Stomach (tissue), 19 donors: ENCODE measurements at regions of chr20 and their contacts with region 1.

Region 1: GRCh38 chr20:63381807-63382322 is 20.7 kb upstream of the CHRNA4 start:
- DNase-seq: peak in 1 of 2 donors; percentile 59
- H3K4me3 ChIP-seq: no peak overlapping the region
- H3K27ac ChIP-seq: no peak overlapping the region
- H3K4me1 ChIP-seq: peaks cover 0 to 5% (median 0%) of the 10 kb centered on the region in 4 donors
- H3K27me3 ChIP-seq: peaks cover 16 to 79% (median 59%) of the 10 kb centered on the region in 3 donors
- CTCF ChIP-seq: peak in 5 of 7 experiments; percentile 64 to 88 (median 80)
- EP300 ChIP-seq: no peak
- POLR2A ChIP-seq: no peak

Region 2: GRCh38 chr20:63309261-63310071 is 72.4 kb before region 1 on chr20:
- intact Hi-C with region 1: loop called (anchors 5 kb)
- DNase-seq: peak; percentile 36 to 85
- H3K4me3 ChIP-seq: no peak overlapping the region
- H3K27ac ChIP-seq: no peak overlapping the region
- H3K4me1 ChIP-seq: peaks cover 0 to 7% (median 3%) of the 10 kb centered on the region in 4 donors
- H3K27me3 ChIP-seq: peaks cover 2 to 95% (median 56%) of the 10 kb centered on the region in 3 donors
- CTCF ChIP-seq: peak in 5 of 7 experiments; percentile 58 to 84 (median 77)
- EP300 ChIP-seq: no peak
- POLR2A ChIP-seq: no peak

Region 3: GRCh38 chr20:63574156-63574828 is 192.4 kb after region 1 on chr20 and contains the start of gene HELZ2:
- intact Hi-C with region 1: no loop called
- DNase-seq: peak; percentile 87 to 93
- H3K4me3 ChIP-seq: peak within 1 kb of the TSS; percentile 68 to 86 (median 73)
- H3K27ac ChIP-seq: peak within 1 kb of the TSS; percentile 67 to 93 (median 91)
- H3K4me1 ChIP-seq: peaks cover 12 to 38% (median 30%) of the 10 kb centered on the region in 4 donors
- H3K27me3 ChIP-seq: peaks cover 0 to 5% (median 4%) of the 10 kb centered on the region in 3 donors
- CTCF ChIP-seq: no peak
- EP300 ChIP-seq: no peak
- POLR2A ChIP-seq: no peak
- total RNA-seq, gene HELZ2: 27.4 to 95.5 (median 41.2) TPM

Region 4: DNA sequence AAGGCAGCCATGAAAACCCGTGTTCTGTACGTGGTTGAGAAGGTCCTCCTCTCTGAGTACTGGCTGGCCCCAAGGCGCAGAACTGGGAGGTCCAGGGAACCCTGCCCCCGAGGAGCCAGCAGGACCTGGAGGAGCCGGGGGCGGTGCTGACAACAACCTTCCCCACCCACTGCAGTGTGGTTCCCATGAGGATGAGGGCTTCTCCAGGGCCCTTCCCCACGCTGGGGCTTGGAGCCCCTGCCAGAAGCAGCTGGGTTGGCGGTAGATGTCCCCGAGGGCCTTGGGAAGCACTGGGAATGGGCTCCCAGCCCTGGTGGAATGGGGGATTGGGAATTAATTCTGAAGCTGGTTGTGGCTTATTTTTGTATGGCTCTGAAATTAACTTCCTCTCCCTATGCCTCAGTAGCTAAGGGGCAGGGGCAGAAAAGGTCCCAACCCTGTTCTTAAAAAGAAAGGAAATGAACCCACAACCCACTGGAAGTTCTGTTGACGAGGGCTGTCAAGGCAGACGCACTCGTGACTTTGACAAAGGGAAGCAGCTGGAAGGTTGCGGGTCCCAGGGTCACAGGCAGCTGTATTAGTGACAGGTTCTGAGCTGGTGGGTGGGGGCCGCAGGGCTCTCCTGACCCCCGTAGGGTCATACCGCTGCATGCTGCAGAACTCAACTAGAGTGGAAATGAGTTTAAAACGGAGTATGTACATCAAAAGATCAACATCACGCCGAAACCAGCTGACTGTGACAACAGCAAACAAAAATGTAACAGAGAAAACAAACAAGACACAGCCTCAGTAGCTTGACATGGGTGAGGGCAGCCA is 206.1 kb after region 1 on chr20:
- intact Hi-C with region 1: no loop called
- DNase-seq: peak in 1 of 2 donors; percentile 51
- H3K4me3 ChIP-seq: no peak overlapping the region
- H3K27ac ChIP-seq: no peak overlapping the region
- H3K4me1 ChIP-seq: peaks cover 0 to 5% (median 0%) of the 10 kb centered on the region in 4 donors
- H3K27me3 ChIP-seq: no peaks in the 10 kb centered on the region
- CTCF ChIP-seq: no peak
- EP300 ChIP-seq: no peak
- POLR2A ChIP-seq: no peak